Activated naive CD4-positive, alpha-beta T cell treated with anti-CD3 and anti-CD28 coated beads for 36 hours (primary cell): ENCODE measurements at regions of chr19 and their contacts with region 1.

Region 1: DNA sequence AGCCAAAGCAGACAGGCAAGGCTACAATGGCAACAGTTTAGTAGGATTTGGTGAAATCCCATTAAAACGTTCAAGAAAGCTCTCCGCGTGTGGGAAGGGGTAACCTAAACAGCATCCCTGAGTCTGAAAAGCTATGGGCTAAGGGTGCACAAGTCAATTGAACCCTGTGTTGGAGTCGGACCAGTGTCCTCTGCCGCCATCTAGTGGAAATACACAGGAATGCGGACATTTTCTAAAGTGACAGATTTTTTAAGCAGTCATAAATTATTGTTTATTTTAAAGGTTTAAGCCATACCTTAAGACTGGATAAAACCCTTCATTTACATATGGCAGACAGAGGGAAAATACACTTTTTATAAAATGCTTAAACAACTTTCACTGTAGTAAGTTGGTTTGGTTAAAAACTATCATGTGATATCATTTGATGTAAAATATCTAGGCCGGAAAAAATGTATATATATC is 26.5 kb upstream of the LSM14A start:
- DNase-seq: peak; percentile 70
- H3K4me3 Mint-ChIP-seq: no peak overlapping the region
- H3K27ac Mint-ChIP-seq: no peak overlapping the region
- H3K4me1 Mint-ChIP-seq: no peaks in the 10 kb centered on the region
- H3K27me3 Mint-ChIP-seq: no peaks in the 10 kb centered on the region

Region 2: DNA sequence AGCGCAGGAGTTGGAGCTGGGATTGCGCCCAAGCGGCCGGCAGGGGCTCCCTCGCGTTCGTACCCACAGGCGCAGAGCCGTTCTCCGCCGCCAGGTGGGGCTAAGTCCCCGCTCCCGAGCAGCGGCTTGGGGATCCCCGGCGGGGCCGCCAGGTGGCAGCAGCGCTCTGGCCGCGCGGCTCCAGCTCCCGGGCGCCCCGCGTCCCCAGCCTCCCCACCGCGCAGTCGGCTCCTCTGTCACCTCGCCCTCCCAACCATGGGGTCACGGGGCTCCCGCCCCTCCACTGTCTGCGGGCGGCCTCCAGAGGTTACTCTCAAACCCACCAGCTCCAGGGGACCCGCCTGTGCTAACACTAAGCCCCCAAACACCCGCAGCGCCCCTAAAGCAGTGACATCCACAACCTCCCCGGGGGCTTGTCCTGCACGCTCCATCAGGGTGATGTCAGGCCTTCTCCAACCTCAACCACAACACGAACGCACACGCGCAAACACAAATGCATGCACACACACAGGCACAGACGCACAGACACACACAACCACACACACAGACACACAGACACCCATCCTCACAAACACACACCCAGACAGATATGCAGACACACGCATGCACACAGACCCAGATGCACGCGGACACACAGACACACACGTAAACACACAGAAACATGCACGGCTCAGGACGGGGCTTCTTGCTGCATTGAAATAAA is 367.5 kb before region 1 on chr19:
- CTCF ChIA-PET with region 1: interaction called, 5 read pairs
- intact Hi-C with region 1: loop called (anchors 1 kb)
- DNase-seq: peak; percentile 86
- H3K4me3 Mint-ChIP-seq: no peak overlapping the region
- H3K27ac Mint-ChIP-seq: no peak overlapping the region
- H3K4me1 Mint-ChIP-seq: peaks cover 5% of the 10 kb centered on the region
- H3K27me3 Mint-ChIP-seq: peaks cover 25% of the 10 kb centered on the region

Region 3: GRCh38 chr19:34041925-34042521 is 103.7 kb before region 1 on chr19:
- CTCF ChIA-PET with region 1: interaction called, 44 read pairs
- intact Hi-C with region 1: loop called (anchors 1 kb)
- DNase-seq: peak; percentile 90
- H3K4me3 Mint-ChIP-seq: no peak overlapping the region
- H3K27ac Mint-ChIP-seq: no peak overlapping the region
- H3K4me1 Mint-ChIP-seq: peaks cover 2% of the 10 kb centered on the region
- H3K27me3 Mint-ChIP-seq: peaks cover 5% of the 10 kb centered on the region

Region 4: DNA sequence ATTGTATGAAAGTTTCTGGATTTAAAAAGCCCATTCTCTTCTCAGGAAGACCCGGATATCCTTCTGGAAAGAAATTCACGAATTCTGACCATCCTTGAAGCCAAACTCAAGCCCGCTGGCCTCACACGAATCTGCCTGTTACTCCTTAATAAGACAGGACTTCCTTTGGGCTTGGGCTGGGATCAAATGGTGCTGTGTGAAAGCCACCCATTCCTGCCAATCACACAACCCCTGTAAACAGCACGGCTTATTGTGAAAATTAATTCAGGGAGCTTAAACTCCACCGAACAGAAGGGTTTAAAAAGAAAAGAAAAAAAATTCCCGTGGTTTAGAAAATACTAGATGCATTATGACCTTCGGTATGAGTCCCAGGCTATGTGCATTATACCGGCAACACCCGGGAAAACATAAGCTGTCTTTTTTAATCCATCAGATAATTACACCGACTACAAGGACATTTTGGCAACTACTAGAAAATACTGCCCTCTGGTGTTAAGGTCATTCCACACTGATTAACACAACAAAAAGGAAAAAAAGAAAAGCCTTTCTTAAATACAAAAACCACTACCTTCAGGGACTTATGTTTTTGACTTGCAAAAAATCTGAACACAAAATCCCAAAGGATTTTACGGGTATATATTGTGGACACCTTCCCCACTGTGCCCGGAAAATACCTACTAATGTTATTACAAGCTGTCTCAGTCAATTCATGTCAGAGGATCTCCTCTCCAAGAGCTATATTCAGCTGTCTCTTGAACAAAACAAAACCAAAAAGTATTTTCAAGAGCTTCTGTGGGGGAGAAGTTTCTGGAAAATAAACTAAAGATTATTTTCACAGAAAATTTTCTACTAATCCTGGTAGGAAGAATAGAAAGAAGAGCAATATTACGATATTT is 49.5 kb before region 1 on chr19:
- CTCF ChIA-PET with region 1: interaction called, 3 read pairs
- intact Hi-C with region 1: loop called (anchors 1 kb)
- DNase-seq: no peak
- H3K4me3 Mint-ChIP-seq: no peak overlapping the region
- H3K27ac Mint-ChIP-seq: no peak overlapping the region
- H3K4me1 Mint-ChIP-seq: peaks cover 2% of the 10 kb centered on the region
- H3K27me3 Mint-ChIP-seq: peaks cover 4% of the 10 kb centered on the region

Region 5: GRCh38 chr19:34120846-34121639 is 24.7 kb before region 1 on chr19:
- CTCF ChIA-PET with region 1: interaction called, 44 read pairs
- intact Hi-C with region 1: loop called (anchors 1 kb)
- DNase-seq: peak; percentile 77
- H3K4me3 Mint-ChIP-seq: no peak overlapping the region
- H3K27ac Mint-ChIP-seq: no peak overlapping the region
- H3K4me1 Mint-ChIP-seq: peaks cover 27% of the 10 kb centered on the region
- H3K27me3 Mint-ChIP-seq: no peaks in the 10 kb centered on the region

Region 6: DNA sequence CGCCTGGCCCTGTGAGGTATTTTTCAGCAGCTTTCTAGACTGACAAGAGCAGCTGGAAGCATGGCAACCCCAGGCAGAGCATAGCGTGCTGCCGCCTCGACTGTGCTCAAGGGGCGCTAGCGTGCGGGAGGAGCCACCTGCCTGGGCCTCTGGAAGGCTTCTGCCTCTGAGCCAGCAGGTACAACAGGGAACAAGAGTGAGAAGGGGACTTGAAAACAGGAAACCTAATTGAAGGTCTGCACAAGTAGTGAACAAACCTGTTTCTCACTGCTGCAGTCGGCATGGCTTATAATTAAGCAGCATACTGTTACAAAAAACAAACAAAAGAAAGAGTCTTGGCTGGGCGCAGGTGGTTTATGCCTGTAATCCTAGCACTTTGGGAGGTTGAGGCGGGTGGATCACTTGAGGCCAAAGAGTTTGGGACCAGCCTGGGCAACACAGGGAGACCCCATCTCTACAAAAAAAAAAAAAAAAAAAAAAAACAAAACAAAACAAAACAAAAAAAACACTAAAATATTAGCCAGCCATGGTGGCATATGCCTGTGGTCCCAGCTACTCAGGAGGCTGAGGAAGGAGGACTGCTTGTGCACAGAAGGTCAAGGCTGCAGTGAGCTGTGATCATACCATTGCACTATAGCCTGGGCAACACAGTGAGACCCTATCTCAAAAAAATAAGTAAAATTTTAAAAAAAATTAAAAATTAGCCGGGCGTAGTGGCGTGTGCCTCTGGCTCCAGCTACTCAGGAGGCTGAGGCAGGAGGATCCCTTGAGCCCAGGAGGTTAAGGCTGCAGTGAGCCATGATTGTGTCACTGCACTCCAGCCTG is 96.0 kb after region 1 on chr19:
- CTCF ChIA-PET with region 1: no interaction called
- intact Hi-C with region 1: no loop called
- DNase-seq: peak; percentile 43
- H3K4me3 Mint-ChIP-seq: no peak overlapping the region
- H3K27ac Mint-ChIP-seq: no peak overlapping the region
- H3K4me1 Mint-ChIP-seq: peaks cover 3% of the 10 kb centered on the region
- H3K27me3 Mint-ChIP-seq: no peaks in the 10 kb centered on the region